Heart left ventricle (tissue), 16 donors: ENCODE measurements at regions of chr7 and their contacts with region 1.

Region 1: GRCh38 chr7:141737834-141738591 is at the start of gene SSBP1:
- DNase-seq: peak; percentile 90 to 92 (median 92)
- ATAC-seq: peak; percentile 94 to 98 (median 96)
- H3K4me3 ChIP-seq: peak within 1 kb of the TSS; percentile 63 to 84 (median 72)
- H3K27ac ChIP-seq: peak within 1 kb of the TSS in 11 of 12 donors; percentile 70 to 87 (median 82)
- H3K4me1 ChIP-seq: peaks cover 0 to 31% (median 17%) of the 10 kb centered on the region in 12 donors
- H3K27me3 ChIP-seq: no peaks in the 10 kb centered on the region
- CTCF ChIP-seq: peak; percentile 53 to 93 (median 73)
- POLR2A ChIP-seq: peak in 1 of 2 donors; percentile 46
- total RNA-seq, gene SSBP1: 95.5 to 120 (median 104) TPM

Region 2: DNA sequence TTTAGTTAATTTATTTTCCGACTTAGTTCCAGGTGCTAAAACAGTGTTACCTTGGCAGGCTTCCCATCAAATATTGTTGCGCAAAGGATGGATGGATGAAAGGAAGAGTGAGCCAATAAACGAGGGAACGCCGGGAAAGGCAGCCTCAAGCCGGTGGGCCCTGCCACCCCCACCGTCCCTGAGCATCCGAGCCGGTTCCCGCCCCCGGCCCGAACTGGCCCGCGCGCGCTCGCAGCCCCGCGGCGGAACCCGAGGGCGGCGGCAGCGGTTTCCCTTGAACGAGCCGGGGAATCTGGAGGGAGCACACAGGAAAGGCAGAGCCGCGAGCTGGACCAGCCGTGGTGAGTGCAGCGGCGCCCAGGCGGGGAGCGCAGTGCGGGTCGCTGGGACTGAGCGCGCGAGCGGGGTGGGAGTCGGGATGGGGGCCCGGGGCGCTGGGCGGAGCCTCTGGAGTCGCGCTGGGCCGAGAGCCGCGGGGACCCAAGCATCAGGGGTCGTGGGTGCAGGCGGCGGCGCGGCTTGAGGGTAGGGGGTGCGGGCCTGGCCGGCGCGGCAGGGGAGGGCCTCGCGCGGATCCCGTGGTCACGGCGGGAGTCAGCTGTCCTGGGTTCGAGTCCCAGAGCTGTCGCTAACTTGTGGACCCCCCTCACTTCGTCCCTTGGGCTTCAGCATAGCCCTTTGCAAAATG is 186.8 kb before region 1 on chr7 and contains the start of gene AGK:
- intact Hi-C with region 1: loop called in 1 of 10 experiments (anchors 5 kb)
- DNase-seq: peak; percentile 77 to 86 (median 79)
- ATAC-seq: peak; percentile 73 to 96 (median 95)
- H3K4me3 ChIP-seq: peak within 1 kb of the TSS; percentile 47 to 99 (median 94)
- H3K27ac ChIP-seq: peak within 1 kb of the TSS; percentile 30 to 87 (median 76)
- H3K4me1 ChIP-seq: peaks cover 0 to 27% (median 14%) of the 10 kb centered on the region in 12 donors
- H3K27me3 ChIP-seq: no peaks in the 10 kb centered on the region
- CTCF ChIP-seq: no peak
- POLR2A ChIP-seq: peak in 1 of 2 donors; percentile 42
- total RNA-seq, gene AGK: 30.6 to 49.8 (median 41.3) TPM

Region 3: GRCh38 chr7:141663081-141663849 is 74.7 kb before region 1 on chr7:
- intact Hi-C with region 1: loop called in 6 of 10 experiments (anchors 5 to 10 kb)
- DNase-seq: no peak
- ATAC-seq: peak in 2 of 4 donors; percentile 38 to 39
- H3K4me3 ChIP-seq: no peak overlapping the region
- H3K27ac ChIP-seq: peak overlapping the region in 2 of 12 donors; percentile 30 to 85
- H3K4me1 ChIP-seq: peaks cover 0 to 43% (median 0%) of the 10 kb centered on the region in 12 donors
- H3K27me3 ChIP-seq: no peaks in the 10 kb centered on the region
- CTCF ChIP-seq: no peak
- POLR2A ChIP-seq: no peak

Region 4: GRCh38 chr7:141701489-141702046 is 36.4 kb before region 1 on chr7:
- intact Hi-C with region 1: loop called in 1 of 10 experiments (anchors 2 kb)
- DNase-seq: peak; percentile 38 to 67 (median 50)
- ATAC-seq: peak; percentile 50 to 69 (median 66)
- H3K4me3 ChIP-seq: peak overlapping the region; percentile 65 to 98 (median 82)
- H3K27ac ChIP-seq: peak overlapping the region; percentile 47 to 90 (median 86)
- H3K4me1 ChIP-seq: peaks cover 0 to 50% (median 23%) of the 10 kb centered on the region in 12 donors
- H3K27me3 ChIP-seq: no peaks in the 10 kb centered on the region
- CTCF ChIP-seq: no peak
- POLR2A ChIP-seq: no peak